CD4-positive, alpha-beta memory T cell (primary cell): ENCODE measurements at regions of chr2 and their contacts with region 1.

Region 1: GRCh38 chr2:73071360-73072133 is at the start of gene SFXN5:
- DNase-seq: peak; percentile 90 to 95 (median 90)
- H3K4me3 ChIP-seq: peak within 1 kb of the TSS; percentile 88 to 90
- H3K4me3 Mint-ChIP-seq: peak within 1 kb of the TSS; percentile 91 to 96 (median 94)
- H3K27ac ChIP-seq: peak within 1 kb of the TSS; percentile 65
- H3K27ac Mint-ChIP-seq: peak within 1 kb of the TSS; percentile 91 to 97 (median 93)
- H3K4me1 ChIP-seq: peaks cover 14% of the 10 kb centered on the region
- H3K4me1 Mint-ChIP-seq: peaks cover 17 to 47% (median 20%) of the 10 kb centered on the region in 4 donors
- H3K27me3 ChIP-seq: no peaks in the 10 kb centered on the region
- H3K27me3 Mint-ChIP-seq: peaks cover 0 to 1% of the 10 kb centered on the region in 2 donors
- total RNA-seq, gene SFXN5: 6.5 to 10.0 TPM

Region 2: GRCh38 chr2:72613931-72614330 is 457.6 kb before region 1 on chr2:
- CTCF ChIA-PET with region 1: no interaction called
- POLR2A ChIA-PET with region 1: no interaction called
- intact Hi-C with region 1: no loop called
- DNase-seq: no peak
- H3K4me3 ChIP-seq: no peak overlapping the region
- H3K4me3 Mint-ChIP-seq: no peak overlapping the region
- H3K27ac ChIP-seq: no peak overlapping the region
- H3K27ac Mint-ChIP-seq: peak overlapping the region in 1 of 7 donors; percentile 43
- H3K4me1 ChIP-seq: no peaks in the 10 kb centered on the region
- H3K4me1 Mint-ChIP-seq: peaks cover 5 to 12% (median 6%) of the 10 kb centered on the region in 4 donors
- H3K27me3 ChIP-seq: no peaks in the 10 kb centered on the region
- H3K27me3 Mint-ChIP-seq: no peaks in the 10 kb centered on the region

Region 3: DNA sequence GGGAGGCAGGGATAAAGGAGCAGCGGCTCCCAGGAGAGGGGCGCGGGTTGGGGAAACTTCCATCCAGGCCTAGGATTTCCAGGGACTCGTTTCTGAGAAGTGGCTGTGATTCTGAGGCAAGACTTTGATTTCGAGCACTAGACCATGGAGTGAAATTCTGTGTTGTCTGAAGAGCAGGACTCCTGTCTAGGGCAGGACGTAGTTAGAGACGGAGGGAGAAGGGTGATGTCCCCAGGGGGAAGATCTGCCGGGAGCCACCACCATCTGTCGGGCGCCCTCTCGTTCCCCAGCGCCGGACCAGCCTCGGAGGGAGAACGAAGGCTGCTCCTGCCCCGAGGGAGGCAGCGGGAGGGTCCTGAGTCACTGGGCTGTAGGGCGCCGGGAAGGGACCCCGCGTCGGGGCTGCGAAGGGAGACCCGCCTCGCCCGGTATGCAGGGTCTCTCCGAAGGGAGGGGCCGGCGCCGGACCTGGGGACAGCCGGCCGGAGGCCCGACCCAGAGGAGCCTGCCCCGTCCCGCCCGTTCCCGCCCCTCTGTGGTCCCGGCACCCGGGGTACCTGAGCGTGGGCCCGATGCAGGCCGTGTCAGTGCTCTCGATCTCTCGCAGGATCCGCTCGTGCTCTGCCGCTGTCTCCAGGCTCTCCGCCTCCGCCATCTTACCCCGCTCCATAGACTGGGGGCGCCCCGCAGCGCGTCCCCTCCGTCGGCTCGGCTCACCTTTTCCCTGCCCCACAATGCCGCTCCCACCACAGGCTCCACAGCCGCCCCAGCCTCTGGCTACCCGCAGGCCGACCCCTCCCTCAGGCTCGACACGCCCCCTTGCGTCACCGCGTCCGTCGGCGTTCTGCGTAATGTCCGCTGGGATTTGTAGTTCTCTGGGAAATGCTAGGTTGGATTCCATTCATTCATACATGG is 246.0 kb before region 1 on chr2 and contains the start of gene EXOC6B:
- CTCF ChIA-PET with region 1: no interaction called
- POLR2A ChIA-PET with region 1: no interaction called
- intact Hi-C with region 1: loop called (anchors 2 kb)
- DNase-seq: peak; percentile 83 to 87 (median 84)
- H3K4me3 ChIP-seq: peak within 1 kb of the TSS; percentile 66 to 75
- H3K4me3 Mint-ChIP-seq: peak within 1 kb of the TSS; percentile 94 to 99 (median 97)
- H3K27ac ChIP-seq: peak within 1 kb of the TSS; percentile 56
- H3K27ac Mint-ChIP-seq: peak within 1 kb of the TSS; percentile 77 to 97 (median 96)
- H3K4me1 ChIP-seq: peaks cover 23% of the 10 kb centered on the region
- H3K4me1 Mint-ChIP-seq: peaks cover 26 to 38% (median 31%) of the 10 kb centered on the region in 4 donors
- H3K27me3 ChIP-seq: no peaks in the 10 kb centered on the region
- H3K27me3 Mint-ChIP-seq: peaks cover 0 to 3% of the 10 kb centered on the region in 2 donors
- total RNA-seq, gene EXOC6B: 17.5 to 19.8 TPM

Region 4: DNA sequence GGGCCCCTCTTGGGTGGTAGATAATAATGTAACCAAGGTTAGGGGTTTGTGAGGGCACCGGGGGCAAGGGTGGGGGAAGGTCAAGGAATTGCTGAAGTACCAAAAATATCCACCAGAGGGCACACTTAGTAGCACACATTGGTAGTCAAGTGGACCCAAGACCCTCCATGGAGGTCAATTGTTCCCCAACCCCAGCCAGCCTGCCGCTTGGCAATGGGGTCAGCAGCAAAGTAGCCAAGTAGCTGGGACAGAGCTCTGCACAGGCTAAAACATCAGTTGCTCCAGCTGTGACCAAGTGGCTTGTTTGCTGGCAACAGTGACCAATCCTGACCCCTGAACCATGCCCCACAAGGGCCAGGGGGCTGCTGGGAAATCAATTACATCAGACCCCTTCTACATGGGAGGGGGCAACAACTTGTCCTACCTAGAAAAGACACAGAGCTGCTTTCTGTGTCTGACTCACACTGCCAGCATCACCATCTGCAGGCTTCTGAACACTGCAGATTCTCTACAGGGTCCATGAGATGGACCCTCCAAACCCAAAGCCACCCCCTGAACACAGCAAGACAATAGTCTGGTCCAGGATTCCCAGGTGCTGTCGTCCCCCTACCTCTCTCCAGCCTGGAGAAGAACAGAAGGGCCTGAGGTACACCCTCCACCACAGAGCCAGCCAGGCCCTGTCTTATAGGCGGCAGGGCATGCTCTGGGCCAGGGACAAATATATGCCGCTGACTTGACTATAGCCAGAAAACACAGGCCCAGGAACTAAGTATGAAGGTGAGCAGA is 78.2 kb before region 1 on chr2:
- CTCF ChIA-PET with region 1: no interaction called
- POLR2A ChIA-PET with region 1: no interaction called
- intact Hi-C with region 1: loop called (anchors 1 kb)
- DNase-seq: peak; percentile 43 to 57 (median 49)
- H3K4me3 ChIP-seq: no peak overlapping the region
- H3K4me3 Mint-ChIP-seq: no peak overlapping the region
- H3K27ac ChIP-seq: no peak overlapping the region
- H3K27ac Mint-ChIP-seq: no peak overlapping the region
- H3K4me1 ChIP-seq: no peaks in the 10 kb centered on the region
- H3K4me1 Mint-ChIP-seq: no peaks in the 10 kb centered on the region
- H3K27me3 ChIP-seq: no peaks in the 10 kb centered on the region
- H3K27me3 Mint-ChIP-seq: no peaks in the 10 kb centered on the region

Region 5: DNA sequence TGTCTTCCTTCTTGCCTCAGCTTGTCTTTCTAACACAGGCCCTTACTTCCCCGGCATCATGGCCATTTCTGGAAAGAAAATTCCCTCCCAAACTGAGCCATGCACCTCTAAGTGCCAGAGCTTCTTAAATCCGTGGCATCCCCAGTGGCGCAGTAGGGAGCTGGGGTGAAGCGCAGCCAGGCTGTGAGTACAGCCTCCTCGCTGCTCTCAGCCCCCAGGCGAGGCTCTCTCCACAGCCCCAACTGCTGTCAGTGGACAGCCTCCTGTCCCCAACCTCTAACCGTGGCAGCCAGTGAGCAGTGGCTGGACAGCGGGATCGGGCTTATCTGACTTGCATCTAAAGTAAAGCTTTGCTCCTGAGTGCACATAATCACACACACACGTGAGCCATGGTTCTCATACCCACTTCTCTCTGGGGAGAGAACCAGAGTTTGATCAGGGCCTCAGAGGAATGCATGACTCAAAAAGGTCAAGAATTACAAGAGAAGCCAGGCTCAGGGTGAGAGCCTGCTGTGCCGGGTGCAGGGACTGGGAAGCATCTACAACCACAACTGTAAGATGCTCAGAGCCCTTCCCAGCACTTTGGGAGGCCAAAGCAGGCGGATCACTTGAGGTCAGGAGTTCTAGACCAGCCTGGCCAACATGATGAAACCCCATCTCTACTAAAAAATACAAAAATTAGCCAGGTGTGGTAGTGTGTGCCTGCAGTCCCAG is 50.7 kb before region 1 on chr2:
- CTCF ChIA-PET with region 1: no interaction called
- POLR2A ChIA-PET with region 1: no interaction called
- intact Hi-C with region 1: no loop called
- DNase-seq: no peak
- H3K4me3 ChIP-seq: no peak overlapping the region
- H3K4me3 Mint-ChIP-seq: peak overlapping the region in 1 of 8 donors; percentile 12
- H3K27ac ChIP-seq: no peak overlapping the region
- H3K27ac Mint-ChIP-seq: peak overlapping the region in 1 of 7 donors; percentile 66
- H3K4me1 ChIP-seq: no peaks in the 10 kb centered on the region
- H3K4me1 Mint-ChIP-seq: no peaks in the 10 kb centered on the region
- H3K27me3 ChIP-seq: no peaks in the 10 kb centered on the region
- H3K27me3 Mint-ChIP-seq: peaks cover 0 to 1% of the 10 kb centered on the region in 2 donors

Region 6: DNA sequence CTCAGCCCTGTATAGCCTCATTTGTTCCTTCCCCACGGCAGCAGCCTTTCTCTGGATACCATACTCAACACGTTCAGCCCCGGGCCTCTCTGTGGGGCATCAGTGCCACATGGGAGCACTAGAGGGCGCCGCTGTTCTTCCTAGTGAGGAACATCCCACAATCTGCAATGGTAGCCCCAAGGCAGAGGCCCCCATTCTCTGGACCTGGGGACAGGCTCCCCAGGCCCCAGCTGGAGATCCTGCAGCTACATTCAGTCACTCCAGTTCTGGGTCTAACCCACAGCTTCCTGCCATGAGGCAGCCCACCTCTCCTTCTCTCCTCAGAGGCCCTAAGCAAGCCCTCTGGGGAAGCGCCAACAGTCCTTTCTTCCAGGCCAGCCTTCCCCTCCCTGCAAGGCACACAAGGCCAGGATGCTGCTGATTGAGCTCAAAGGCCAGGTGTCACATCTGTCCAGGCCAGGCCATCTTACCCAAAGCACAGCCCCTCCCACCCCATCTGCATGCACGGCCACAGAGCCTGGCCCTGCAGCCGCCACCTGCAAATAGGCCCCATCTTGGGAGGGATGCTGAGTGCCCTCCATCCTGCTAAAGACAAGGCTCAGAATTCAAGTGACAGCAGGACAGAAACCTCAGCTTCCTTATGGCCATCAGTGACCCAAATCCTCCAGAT is 14.3 kb after region 1 on chr2:
- CTCF ChIA-PET with region 1: interaction called, 8 read pairs
- POLR2A ChIA-PET with region 1: interaction called, 3 read pairs
- intact Hi-C with region 1: loop called (anchors 1 kb)
- DNase-seq: peak; percentile 71 to 80 (median 74)
- H3K4me3 ChIP-seq: no peak overlapping the region
- H3K4me3 Mint-ChIP-seq: no peak overlapping the region
- H3K27ac ChIP-seq: no peak overlapping the region
- H3K27ac Mint-ChIP-seq: peak overlapping the region in 4 of 7 donors; percentile 23 to 53 (median 37)
- H3K4me1 ChIP-seq: no peaks in the 10 kb centered on the region
- H3K4me1 Mint-ChIP-seq: peaks cover 1 to 8% (median 4%) of the 10 kb centered on the region in 4 donors
- H3K27me3 ChIP-seq: no peaks in the 10 kb centered on the region
- H3K27me3 Mint-ChIP-seq: no peaks in the 10 kb centered on the region

Region 7: DNA sequence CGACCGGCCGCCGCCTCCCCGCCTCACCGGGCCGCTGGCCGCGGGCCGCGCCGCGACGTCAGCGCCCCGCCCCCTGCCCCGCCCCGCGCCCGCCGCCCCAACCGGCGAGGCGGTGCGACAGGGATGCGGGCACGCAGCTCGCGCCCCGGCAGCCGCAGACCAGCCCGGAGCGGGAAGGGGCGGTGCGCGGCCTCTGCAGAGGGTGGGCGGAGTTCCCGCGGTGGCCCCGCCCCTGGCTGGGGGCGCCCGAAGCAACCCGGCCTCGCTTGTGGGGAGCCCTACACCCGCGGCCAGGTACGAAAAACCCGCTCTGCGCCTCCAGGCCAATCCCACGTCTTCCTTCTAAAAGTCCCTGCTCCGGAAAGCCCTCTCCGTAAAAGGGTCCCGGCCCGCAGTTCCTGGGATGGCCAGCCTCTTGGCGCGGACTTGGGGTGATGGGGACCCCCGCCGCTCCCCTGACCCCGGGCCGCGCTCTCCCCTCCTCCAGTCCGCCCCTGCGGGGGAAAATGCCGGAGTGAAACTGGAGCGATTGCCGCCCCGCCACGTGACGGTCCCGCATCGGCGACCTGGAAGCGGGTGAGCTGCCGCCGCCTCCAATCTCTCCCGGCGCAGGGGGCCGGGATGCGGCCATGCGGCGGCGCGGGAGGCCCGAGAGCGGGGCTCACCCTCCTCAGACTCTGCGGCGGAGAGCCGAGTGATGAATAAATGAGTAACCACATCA is 41.5 kb after region 1 on chr2 and contains the start of gene RAB11FIP5:
- CTCF ChIA-PET with region 1: no interaction called
- POLR2A ChIA-PET with region 1: interaction called, 9 read pairs
- intact Hi-C with region 1: loop called (anchors 1 kb)
- DNase-seq: peak; percentile 76 to 83 (median 82)
- H3K4me3 ChIP-seq: peak within 1 kb of the TSS in 1 of 2 donors; percentile 65
- H3K4me3 Mint-ChIP-seq: peak within 1 kb of the TSS; percentile 84 to 91 (median 89)
- H3K27ac ChIP-seq: peak within 1 kb of the TSS; percentile 60
- H3K27ac Mint-ChIP-seq: peak within 1 kb of the TSS; percentile 29 to 90 (median 85)
- H3K4me1 ChIP-seq: peaks cover 31% of the 10 kb centered on the region
- H3K4me1 Mint-ChIP-seq: peaks cover 17 to 40% (median 27%) of the 10 kb centered on the region in 4 donors
- H3K27me3 ChIP-seq: no peaks in the 10 kb centered on the region
- H3K27me3 Mint-ChIP-seq: no peaks in the 10 kb centered on the region
- total RNA-seq, gene RAB11FIP5: 10.9 to 12.8 TPM

Region 8: GRCh38 chr2:73293534-73294171 is 222.1 kb after region 1 on chr2 and contains the start of gene EGR4:
- CTCF ChIA-PET with region 1: no interaction called
- POLR2A ChIA-PET with region 1: no interaction called
- intact Hi-C with region 1: loop called (anchors 5 kb)
- DNase-seq: peak; percentile 90 to 97 (median 92)
- H3K4me3 ChIP-seq: peak within 1 kb of the TSS; percentile 55 to 71
- H3K4me3 Mint-ChIP-seq: peak within 1 kb of the TSS; percentile 64 to 87 (median 78)
- H3K27ac ChIP-seq: no peak within 1 kb of the TSS
- H3K27ac Mint-ChIP-seq: peak within 1 kb of the TSS in 4 of 7 donors; percentile 69 to 77 (median 72)
- H3K4me1 ChIP-seq: peaks cover 28% of the 10 kb centered on the region
- H3K4me1 Mint-ChIP-seq: peaks cover 6 to 22% (median 15%) of the 10 kb centered on the region in 4 donors
- H3K27me3 ChIP-seq: peaks cover 30% of the 10 kb centered on the region
- H3K27me3 Mint-ChIP-seq: peaks cover 37 to 42% of the 10 kb centered on the region in 2 donors
- total RNA-seq, gene EGR4: not detected

Region 9: DNA sequence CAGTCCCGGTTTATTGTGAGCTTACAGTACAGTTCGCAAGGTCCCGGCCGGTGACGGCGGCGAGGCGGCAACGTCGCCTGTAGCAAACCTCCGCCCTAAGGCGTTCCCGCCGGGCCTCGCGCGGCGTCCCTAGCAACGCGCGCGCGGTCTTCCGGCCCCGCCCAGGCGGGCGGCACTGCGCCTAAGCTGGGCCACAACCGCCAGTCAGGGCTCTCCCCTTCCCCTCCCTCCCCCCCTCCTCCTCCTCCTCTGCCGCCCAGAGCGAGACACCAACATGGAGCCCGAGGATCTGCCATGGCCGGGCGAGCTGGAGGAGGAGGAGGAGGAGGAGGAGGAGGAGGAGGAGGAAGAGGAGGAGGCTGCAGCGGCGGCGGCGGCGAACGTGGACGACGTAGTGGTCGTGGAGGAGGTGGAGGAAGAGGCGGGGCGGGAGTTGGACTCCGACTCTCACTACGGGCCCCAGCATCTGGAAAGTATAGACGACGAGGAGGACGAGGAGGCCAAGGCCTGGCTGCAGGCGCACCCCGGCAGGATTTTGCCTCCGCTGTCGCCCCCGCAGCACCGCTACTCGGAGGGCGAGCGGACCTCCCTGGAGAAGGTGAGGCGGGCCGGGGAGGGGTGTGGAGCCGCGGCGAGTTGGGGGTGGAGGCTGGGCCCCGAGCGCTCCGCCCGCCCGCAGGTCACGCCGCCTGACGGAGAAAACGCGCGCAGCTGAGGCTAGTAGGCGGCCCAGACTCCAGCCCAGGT is 314.2 kb after region 1 on chr2 and contains the start of gene ALMS1:
- CTCF ChIA-PET with region 1: no interaction called
- POLR2A ChIA-PET with region 1: interaction called, 3 read pairs
- intact Hi-C with region 1: loop called (anchors 1 kb)
- DNase-seq: peak; percentile 86 to 91 (median 91)
- H3K4me3 ChIP-seq: peak within 1 kb of the TSS; percentile 62 to 79
- H3K4me3 Mint-ChIP-seq: peak within 1 kb of the TSS; percentile 91 to 93 (median 92)
- H3K27ac ChIP-seq: peak within 1 kb of the TSS; percentile 77
- H3K27ac Mint-ChIP-seq: peak within 1 kb of the TSS; percentile 96 to 99 (median 98)
- H3K4me1 ChIP-seq: peaks cover 25% of the 10 kb centered on the region
- H3K4me1 Mint-ChIP-seq: peaks cover 28 to 43% (median 34%) of the 10 kb centered on the region in 4 donors
- H3K27me3 ChIP-seq: no peaks in the 10 kb centered on the region
- H3K27me3 Mint-ChIP-seq: peaks cover 0 to 3% of the 10 kb centered on the region in 2 donors
- total RNA-seq, gene ALMS1: 35.5 to 42.9 TPM